Posterior cingulate gyrus (tissue), 11 donors: ENCODE measurements at regions of chr7 and their contacts with region 1.

Region 1: DNA sequence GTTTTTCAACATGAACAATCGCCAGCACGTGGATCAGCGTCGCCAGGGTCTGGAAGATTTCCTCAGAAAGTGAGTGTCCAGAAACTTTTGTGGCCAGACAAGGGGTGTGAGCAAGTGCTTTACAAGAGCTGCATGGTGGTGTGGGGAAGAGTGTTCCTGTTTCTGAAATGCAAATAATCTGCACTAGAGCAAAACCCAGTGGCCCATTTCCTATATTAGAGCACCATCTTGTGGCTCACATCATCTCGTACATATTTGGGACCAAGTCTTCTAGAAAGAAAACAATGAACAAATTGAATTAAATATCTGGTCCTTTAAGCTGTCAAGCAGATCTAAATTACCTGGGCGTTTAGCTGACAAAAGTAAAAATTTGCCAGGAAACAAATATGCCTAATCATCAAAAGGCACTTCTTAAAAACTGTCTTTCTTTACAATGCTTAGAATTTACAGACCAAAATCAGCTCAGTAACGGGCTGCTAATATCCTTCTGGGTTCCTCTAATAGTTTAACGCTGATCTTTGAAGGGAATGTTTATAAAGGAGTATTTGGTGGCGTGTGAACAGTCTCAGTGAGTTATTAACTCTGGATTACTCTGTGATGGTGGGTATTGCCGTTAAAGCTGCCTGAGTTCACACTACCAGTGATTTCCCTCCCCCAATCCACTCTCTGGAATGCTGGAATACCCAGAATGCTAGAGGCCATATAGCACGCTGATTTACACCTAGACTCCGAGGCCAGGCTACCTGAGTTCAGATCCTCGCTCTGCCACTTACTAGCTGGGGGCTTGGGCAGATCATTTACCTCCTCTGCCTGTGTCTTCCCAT is 73.6 kb downstream of the SNX10 start:
- DNase-seq: peak in 4 of 10 donors; percentile 14 to 54 (median 36)

Region 2: GRCh38 chr7:26090927-26091519 is 274.3 kb before region 1 on chr7:
- intact Hi-C with region 1: loop called (anchors 1 kb)
- DNase-seq: peak in 1 of 10 donors; percentile 32

Region 3: DNA sequence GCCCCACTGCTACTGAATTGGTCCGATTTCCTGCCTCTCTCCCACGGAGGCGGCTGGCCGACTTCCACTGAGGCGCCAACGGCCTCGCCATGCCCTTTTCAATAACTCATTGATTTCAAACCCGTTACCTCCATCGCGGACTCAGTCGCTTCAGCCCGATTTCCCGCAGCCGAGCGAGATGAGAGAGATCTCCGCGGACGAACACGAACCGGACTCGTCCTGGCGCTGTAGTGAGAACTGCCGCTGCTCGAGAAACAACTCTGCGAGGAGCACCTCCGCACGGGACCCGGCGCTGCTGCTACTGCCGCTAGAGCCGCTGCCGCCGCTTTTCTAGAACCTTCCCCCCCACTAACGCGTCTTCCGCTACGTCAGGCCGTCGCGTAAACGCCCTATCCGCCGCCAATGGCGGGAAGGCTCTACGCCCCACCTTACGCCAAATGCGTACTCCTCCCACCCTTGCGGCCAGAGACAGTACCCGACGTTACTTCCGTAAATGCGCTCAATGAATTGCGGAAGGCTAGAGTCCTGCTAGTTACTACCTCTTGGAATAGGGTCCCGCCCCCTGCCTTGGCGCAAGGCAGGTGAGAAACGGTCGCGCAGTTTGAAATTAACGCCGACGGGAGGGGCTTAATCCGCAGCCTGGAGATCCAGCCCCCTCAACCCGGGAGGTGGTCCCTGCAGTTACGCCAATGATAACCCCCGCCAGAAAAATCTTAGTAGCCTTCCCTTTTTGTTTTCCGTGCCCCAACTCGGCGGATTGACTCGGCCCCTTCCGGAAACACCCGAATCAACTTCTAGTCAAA is 164.6 kb before region 1 on chr7 and contains the start of gene HNRNPA2B1:
- intact Hi-C with region 1: loop called (anchors 5 kb)
- DNase-seq: peak; percentile 95 to 99 (median 96)

Region 4: DNA sequence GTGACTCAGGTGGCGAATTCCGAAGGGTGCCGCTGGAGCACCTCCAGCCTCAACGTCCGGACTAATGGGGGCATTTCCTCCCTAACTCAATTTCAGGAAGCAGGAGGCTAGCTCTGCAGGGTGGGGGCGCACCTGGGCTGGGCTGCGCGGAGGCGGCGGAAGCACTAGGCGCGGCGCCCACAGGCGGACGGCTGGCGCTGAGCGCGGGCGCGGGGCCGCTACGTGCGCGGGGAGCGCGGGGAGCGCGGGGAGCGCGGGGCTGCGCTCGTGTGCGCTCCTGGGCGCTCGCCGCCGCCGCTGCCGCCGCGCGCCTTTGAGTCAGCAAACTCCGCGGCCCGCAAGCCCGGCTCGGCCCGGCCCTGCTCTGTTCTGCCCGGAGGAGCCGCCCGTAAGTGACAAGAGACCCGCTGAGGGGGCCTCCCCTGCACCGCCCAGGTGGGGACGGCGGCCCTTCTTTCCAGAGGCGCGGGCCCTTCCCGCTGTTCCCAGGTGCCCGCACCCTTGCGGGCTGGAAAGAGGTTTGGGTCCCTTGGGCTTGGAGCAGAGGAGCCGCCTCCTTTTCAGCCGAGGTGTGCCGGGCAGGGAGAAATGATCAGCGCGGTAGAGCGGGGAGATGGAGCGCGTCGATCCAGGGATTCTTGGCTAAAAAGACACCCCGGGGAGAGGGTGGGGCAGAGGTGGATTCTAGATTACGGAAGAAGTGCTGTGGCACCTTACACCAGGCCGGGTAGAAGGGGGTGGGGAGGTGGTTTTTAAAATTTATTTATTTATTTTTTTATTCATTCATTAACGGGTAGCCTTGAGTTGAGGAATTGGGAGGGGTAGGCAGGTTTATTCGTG is 73.4 kb before region 1 on chr7 and contains the start of gene SNX10:
- intact Hi-C with region 1: loop called (anchors 5 kb)
- DNase-seq: peak; percentile 22 to 94 (median 52)

Region 5: DNA sequence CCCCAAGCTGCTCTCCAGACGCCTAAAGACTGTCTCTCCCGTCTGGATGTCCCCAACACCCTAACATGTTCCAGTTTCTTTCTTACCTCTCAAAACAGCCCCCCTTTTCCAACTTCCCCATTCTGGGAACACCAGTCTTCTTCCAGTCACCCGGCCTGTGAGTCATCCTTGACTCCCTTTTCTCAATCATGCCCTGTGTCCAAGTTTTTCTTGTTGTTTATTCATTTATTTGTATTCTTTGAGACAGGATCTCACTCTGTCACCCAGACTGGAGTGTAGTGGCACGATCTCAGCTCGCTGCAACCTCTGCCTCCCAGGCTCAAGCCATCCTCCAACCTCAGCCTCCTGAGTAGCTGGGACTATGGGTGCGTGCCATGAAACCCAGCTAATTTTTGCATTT is 58.1 kb before region 1 on chr7:
- intact Hi-C with region 1: no loop called
- DNase-seq: no peak

Region 6: DNA sequence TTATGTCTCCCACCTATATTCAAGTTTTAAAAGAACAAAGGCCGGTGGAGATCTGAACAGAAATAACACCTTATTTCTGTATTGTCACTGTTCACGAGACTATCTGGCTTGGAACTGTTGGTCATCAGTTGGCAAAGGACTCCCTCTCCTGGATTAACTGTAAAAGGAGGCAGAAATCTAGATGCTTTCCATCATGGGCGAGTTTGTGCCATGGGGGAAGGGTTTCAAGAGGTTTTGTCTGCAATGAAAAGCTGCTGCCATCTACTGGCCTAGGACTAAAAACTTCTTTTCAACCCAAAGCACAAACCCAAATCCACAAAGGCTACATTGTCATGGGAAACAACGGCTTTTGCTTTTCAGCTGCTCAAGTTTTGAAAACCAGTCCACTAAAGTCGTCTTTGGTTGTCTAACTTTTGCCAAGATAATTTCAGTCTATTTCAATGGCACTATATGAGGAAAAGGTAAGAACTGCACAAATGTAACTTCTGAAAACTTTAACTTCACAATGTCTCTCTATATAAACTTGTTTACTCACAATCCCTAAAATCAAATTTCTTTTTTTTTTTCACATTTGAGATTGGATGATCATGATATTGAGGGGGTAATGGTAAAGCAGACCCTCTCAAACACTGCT is 302.3 kb after region 1 on chr7:
- intact Hi-C with region 1: loop called (anchors 1 kb)
- DNase-seq: peak in 7 of 10 donors; percentile 43 to 92 (median 67)

Region 7: GRCh38 chr7:27160546-27161213 is 795.4 kb after region 1 on chr7:
- intact Hi-C with region 1: loop called (anchors 5 kb)
- DNase-seq: peak; percentile 66 to 97 (median 80)